Cardiac septum (tissue), 1 donor: ENCODE measurements at regions of chr16 and their contacts with region 1.

Region 1: GRCh38 chr16:65249768-65250167 is 127.9 kb upstream of the CDH11 start:
- DNase-seq: peak; percentile 88

Region 2: GRCh38 chr16:65285128-65286048 is 35.6 kb after region 1 on chr16:
- intact Hi-C with region 1: loop called (anchors 2 kb)
- DNase-seq: no peak

Region 3: DNA sequence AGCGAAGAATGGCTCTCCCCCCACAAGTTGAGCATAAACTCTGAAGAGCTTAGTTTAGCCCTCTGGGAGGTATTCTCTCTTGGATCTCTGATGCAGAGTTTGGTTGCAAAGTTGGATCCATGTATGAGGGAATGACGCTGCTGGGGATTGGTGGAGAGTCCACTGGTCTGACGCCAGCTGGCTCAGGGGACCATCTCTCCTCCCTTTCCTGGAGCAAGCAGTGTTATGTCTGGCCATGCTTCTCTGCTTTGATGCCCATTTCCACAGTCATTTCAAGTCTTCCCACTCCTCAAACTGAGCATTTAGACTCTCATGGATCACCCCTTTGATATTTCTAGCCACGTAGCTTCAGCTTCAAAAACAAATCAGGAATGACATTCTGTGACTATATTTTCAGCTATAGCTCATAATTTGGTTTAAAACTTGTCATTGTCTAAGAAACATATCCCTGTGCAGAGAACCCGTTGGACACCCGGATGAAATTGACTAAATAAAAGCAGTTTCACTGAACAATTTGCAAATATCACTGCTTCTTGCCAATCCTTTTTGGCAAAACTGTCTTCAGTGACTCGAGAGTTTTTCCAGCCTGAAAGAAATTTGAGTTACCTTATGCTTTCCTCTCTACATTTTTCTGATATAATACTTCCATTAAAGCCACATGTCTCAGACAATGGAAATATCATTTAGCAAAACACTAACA is 65.5 kb after region 1 on chr16:
- intact Hi-C with region 1: loop called (anchors 2 kb)
- DNase-seq: no peak

Region 4: GRCh38 chr16:65634291-65634690 is 384.5 kb after region 1 on chr16:
- intact Hi-C with region 1: no loop called
- DNase-seq: no peak